ENCODE measurements at regions of chr7 and their contacts with region 1.

Region 1: GRCh38 chr7:28020302-28020940 is 160.2 kb downstream of the JAZF1 start:
- DNase-seq: peak; percentile 67 to 87
- H3K4me3 ChIP-seq: no peak overlapping the region
- CTCF ChIP-seq: peak in 1 of 3 donors; percentile 79
- POLR2A ChIP-seq: no peak

Region 2: DNA sequence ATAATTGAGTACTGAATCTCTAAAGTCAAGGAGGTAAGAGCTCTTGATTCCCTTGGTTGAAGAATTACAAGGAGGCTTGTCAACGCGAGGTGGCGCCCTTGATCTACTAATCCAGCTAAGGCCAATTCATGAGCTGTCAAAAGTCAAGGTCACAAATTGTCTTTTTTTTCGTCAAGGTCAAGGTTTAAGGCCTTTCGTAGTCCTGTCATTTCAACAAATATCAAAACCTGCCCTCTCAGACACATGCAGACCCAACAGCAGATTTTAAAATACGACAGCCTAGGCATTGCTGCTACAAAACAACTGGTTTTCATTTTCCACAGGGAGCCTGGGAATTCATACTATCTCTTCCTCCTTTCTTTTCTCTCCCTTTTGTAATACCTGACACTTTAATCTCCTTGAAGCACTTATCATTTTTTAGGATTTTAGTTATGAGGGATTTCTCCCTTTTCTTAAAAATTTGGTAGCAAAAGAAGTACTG is 824.1 kb before region 1 on chr7:
- intact Hi-C with region 1: loop called (anchors 10 kb)
- DNase-seq: peak; percentile 83 to 98
- H3K4me3 ChIP-seq: no peak overlapping the region
- CTCF ChIP-seq: peak in 1 of 3 donors; percentile 47
- POLR2A ChIP-seq: no peak

Measured in lower leg skin (tissue), 4 donors.